ENCODE measurements at regions of chr19 and their contacts with region 1.

Region 1: GRCh38 chr19:861763-862580 is 2.5 kb downstream of the CFD start:
- DNase-seq: no peak

Region 2: DNA sequence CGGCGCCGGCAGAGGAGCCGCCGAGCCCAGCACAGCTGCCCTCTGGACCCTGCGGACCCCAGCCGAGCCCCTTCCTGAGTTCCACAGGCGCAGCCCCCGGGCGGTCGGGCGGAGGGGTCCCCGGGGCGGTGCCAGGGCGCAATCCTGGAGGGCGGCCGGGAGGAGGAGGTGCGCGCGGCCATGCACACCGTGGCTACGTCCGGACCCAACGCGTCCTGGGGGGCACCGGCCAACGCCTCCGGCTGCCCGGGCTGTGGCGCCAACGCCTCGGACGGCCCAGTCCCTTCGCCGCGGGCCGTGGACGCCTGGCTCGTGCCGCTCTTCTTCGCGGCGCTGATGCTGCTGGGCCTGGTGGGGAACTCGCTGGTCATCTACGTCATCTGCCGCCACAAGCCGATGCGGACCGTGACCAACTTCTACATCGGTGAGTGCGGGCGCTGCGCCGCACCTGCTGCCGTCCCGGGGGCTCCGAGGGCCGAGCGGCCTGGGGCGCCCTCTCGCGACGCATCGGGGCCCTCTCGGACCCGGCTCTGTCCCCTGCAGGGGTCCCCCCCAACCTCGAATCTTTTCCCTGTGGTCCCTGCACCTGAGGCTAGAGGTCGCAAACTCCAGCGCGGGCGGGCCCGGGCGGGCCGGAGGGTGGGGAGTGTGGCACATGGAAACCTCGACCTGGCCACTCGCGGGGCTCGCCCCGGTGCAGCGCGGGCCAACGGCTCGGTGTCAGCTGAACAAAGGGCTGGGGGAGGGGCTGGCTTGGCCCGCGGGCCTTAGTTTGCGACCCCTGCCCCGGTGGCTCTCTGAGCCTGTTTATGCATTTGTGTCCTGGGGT is 55.6 kb after region 1 on chr19 and contains the start of gene KISS1R:
- intact Hi-C with region 1: loop called (anchors 1 to 2 kb)
- DNase-seq: no peak
- total RNA-seq, gene KISS1R: not detected